RWPE1 (cell line): ENCODE measurements at regions of chr15 and their contacts with region 1.

Region 1: DNA sequence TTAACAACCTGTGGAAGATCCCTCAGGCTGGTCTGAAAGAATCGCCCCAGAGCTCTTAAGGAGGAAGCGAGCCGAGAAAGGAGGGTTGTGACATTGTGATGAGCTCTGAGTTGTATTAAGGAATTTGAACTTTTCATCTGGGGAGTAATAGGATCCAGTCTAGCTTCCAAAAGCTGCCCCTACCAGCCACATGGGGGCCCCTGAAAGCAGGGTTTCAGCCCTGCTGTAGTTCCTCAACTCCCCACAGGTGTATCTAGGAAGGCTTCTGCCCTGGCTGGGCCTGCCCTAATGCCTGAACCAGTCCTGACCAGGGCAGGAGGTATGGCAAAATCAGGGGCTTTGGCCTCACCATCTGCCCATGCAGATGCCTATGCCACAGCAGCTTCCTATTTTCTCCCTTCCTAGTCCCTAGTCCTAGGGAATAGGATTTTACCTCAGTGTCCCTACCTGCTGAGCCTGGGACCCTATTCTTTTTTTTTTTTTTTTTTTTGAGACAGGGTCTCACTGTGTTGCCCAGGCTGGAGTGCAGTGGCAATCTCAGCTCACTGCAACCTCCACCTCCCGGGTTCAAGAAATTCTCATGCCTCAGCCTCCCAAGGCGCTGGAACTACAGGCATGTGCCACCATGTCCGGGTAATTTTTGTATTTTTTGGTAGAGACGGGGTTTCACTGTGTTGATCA is 5.0 kb upstream of the AP3S2 start:
- DNase-seq: peak; percentile 90
- H3K27ac ChIP-seq: peak overlapping the region; percentile 20; the same call in 1 of the 2 replicates
- CTCF ChIP-seq: peak; percentile 88

Region 2: GRCh38 chr15:90022905-90023700 is 124.3 kb after region 1 on chr15:
- CTCF ChIA-PET with region 1: interaction called, 5 read pairs
- POLR2A ChIA-PET with region 1: interaction called, 11 read pairs
- DNase-seq: no peak
- H3K27ac ChIP-seq: no peak overlapping the region
- CTCF ChIP-seq: no peak

Region 3: DNA sequence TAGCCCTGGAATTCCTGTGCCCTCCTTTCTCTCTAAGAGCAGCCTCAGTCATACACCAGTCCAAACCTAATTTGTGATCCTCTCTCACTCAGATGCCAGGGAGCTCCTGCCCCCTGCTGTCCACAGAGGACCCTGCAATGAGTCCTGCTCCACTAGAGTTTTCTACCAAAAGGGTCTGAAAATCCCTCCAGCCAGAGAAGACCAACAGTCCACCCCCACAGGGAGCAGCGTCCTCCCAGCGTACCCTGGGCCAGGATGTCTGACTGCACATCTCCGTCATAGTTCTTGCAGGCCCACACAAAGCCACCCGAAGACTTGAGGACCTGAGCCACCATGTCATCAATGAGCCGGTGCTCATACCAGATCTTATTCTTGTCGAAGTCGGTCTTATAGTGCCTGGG is 188.1 kb after region 1 on chr15:
- CTCF ChIA-PET with region 1: interaction called, 23 read pairs
- POLR2A ChIA-PET with region 1: no interaction called
- DNase-seq: peak; percentile 61
- H3K27ac ChIP-seq: no peak overlapping the region
- CTCF ChIP-seq: peak; percentile 76